ENCODE measurements at regions of chr6 and their contacts with region 1.

Region 1: DNA sequence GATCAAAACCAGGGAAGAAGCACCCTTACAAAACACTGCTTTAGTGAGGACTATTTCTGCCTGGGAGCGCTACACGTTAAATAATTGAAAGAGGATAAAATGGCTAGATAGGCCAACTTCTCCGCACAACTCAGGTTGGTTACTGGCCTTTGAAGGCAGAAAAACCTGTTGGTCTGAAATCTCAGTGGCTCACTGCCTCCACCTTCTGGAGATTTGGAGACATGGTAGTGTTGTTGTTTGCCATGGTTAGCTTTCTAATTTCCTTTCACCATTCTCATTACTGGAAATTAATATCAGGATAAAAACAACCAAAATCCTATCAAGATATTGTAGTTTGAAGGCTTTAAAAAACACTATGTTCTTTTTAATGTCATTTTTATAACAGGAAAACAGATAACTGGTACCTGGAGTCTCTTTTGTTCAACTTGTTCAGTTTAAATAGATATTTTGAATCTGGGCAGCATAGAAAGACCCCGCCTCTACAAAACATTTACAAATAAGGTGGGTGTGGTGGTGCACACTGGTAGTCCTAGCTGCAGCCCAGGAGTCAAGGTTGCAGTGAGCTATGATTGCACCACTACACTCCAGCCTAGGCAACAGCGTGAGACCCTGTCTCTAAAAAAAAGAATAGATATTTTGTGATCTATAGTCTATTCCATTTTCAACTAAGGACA is 27.5 kb upstream of the BCLAF1 start:
- DNase-seq: no peak
- ATAC-seq: peak; percentile 75

Region 2: GRCh38 chr6:135506270-135506997 is 810.7 kb before region 1 on chr6:
- intact Hi-C with region 1: loop called (anchors 5 kb)
- DNase-seq: no peak
- ATAC-seq: peak; percentile 59

Region 3: GRCh38 chr6:135535989-135536414 is 781.2 kb before region 1 on chr6:
- intact Hi-C with region 1: loop called (anchors 5 kb)
- DNase-seq: no peak
- ATAC-seq: no peak

Region 4: DNA sequence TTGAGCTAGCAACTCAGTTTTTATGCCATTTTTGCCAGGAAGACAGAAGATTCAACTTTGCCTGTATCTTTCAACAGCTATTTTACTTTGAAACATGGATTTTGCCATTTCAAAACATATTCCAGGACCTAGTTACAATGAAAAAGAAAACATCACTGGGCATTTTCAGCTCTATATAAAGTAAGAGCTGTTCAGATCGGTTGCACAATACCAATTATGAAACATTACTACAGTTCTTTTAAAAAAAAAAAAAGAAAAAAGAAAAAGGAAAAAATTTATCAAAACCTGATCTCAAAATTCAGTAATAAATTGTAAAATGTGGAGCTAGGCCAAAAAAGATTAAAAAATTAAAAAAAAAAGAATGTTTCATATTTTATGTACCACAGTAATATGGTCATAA is 43.1 kb before region 1 on chr6:
- intact Hi-C with region 1: no loop called
- DNase-seq: no peak
- ATAC-seq: no peak

Region 5: GRCh38 chr6:136403166-136403980 is 86.2 kb after region 1 on chr6:
- intact Hi-C with region 1: no loop called
- DNase-seq: no peak
- ATAC-seq: no peak

Measured in Right ventricle myocardium superior (tissue), 1 donor.